Activated CD4-positive, alpha-beta memory T cell treated with anti-CD3 and anti-CD28 coated beads for 36 hours (primary cell): ENCODE measurements at regions of chr9 and their contacts with region 1.

Region 1: GRCh38 chr9:114906908-114907571 is 23.4 kb downstream of the TNFSF8 start:
- DNase-seq: peak; percentile 46
- H3K4me3 Mint-ChIP-seq: no peak overlapping the region
- H3K27ac Mint-ChIP-seq: peak overlapping the region; percentile 96
- H3K4me1 Mint-ChIP-seq: peaks cover 92% of the 10 kb centered on the region
- H3K27me3 Mint-ChIP-seq: no peaks in the 10 kb centered on the region

Region 2: DNA sequence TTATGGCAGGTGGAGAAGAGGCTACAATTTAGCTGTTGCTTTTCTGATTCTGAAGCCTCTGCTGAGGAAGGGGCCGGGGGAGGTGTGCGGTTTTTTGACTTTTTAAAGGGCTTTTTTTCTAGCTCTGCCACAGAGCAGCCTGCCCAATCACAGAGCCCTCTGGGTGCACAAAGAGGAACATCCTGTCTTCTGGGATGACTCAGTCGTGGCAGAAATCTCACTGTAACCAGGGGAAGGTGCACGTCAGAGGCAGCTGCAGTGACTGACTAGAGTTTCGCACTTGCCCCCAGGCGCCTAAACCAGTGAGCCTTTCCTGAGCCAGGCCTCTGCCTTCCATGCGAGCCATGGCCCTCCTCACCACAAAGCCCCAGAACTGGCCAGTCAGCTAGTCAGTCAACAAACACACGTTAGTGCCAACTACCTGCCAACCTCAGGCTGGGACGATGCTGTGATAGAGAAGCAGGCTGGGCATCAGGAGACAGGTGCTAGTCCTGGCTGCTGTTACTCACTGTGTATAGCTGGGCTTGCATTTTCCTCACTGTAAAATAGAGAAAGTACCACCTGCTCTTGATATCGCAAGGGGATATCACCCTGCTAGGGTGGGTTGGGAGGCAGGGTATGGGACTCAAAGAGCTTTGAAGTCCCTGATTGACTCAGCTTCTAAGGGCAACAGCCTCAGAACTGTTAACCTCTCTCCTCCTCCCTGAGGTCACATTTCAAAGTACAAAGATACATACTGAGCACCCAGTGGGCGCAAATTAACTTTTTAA is 521.4 kb before region 1 on chr9:
- CTCF ChIA-PET with region 1: no interaction called
- POLR2A ChIA-PET with region 1: no interaction called
- intact Hi-C with region 1: loop called (anchors 5 kb)
- DNase-seq: peak; percentile 95
- H3K4me3 Mint-ChIP-seq: peak overlapping the region; percentile 99
- H3K27ac Mint-ChIP-seq: peak overlapping the region; percentile 94
- H3K4me1 Mint-ChIP-seq: peaks cover 65% of the 10 kb centered on the region
- H3K27me3 Mint-ChIP-seq: no peaks in the 10 kb centered on the region

Region 3: DNA sequence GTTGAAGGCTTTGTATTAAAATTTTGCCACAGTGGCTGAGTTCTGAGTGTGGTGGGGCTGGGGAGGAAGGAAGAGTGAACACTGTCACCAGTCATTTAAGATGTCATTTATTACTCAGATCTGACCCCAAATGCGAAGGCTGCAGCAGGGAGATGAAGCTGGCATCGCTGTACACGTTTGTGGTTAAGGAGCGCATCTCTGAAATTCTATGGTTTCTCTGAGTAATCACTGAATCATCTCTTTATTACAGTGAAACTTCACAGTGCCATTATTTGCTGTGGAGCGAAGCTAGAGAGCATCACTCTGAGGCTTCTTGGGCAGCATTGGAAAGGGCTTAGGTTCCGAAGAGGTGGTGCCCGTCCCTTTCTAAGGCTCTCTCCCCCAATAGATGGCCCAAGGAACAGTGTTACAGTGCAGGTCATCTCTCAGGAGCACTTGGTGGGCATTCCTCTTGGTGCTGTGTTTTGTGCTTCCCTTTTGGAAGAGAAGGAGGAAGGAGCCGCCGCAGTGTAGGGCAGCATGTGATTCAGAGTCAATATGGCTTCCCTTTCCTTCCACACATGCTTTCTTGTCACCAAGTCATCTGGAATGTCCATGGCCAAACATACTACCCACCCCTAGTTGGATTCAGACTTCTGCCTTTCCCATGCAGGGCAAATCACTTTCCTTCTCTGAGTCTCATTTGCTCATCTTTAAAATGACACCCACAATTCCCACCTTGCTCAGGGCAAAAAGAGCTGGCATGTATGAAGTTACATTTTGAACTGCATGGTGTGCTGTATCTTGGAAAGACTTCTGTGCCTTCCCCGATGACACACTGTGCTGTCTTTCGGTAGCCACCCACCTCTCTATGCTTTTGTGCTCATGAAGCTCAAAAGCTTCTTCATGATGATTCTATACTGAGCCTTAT is 215.7 kb before region 1 on chr9:
- CTCF ChIA-PET with region 1: interaction called, 35 read pairs
- POLR2A ChIA-PET with region 1: interaction called, 9 read pairs
- intact Hi-C with region 1: loop called (anchors 1 kb)
- DNase-seq: peak; percentile 88
- H3K4me3 Mint-ChIP-seq: peak overlapping the region; percentile 55
- H3K27ac Mint-ChIP-seq: peak overlapping the region; percentile 99
- H3K4me1 Mint-ChIP-seq: peaks cover 87% of the 10 kb centered on the region
- H3K27me3 Mint-ChIP-seq: no peaks in the 10 kb centered on the region

Region 4: GRCh38 chr9:114889802-114890251 is 17.2 kb before region 1 on chr9:
- CTCF ChIA-PET with region 1: interaction called, 16 read pairs
- POLR2A ChIA-PET with region 1: interaction called, 4 read pairs
- intact Hi-C with region 1: loop called (anchors 1 kb)
- DNase-seq: peak; percentile 68
- H3K4me3 Mint-ChIP-seq: no peak overlapping the region
- H3K27ac Mint-ChIP-seq: peak overlapping the region; percentile 42
- H3K4me1 Mint-ChIP-seq: peaks cover 59% of the 10 kb centered on the region
- H3K27me3 Mint-ChIP-seq: no peaks in the 10 kb centered on the region

Region 5: DNA sequence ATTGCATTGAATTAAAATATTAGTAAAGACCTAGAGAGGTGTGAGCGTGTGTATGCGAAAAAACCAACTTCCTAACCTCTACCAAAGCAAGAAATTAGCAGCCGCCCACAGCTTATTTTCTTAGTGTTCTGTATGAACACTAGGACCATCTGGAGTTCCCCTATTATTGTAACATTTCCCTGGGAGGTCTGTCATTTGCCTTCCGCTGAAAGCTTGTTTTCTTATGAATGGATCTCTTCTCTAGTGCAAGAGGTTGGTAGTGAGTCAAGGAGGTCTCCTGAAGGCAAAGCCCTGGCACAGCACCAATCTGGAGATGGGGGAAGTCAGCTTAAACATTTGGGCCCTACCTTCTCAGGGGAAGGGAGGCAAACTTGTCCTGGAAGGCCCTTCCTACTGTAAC is 12.6 kb after region 1 on chr9:
- CTCF ChIA-PET with region 1: interaction called, 32 read pairs
- POLR2A ChIA-PET with region 1: interaction called, 19 read pairs
- intact Hi-C with region 1: loop called (anchors 1 kb)
- DNase-seq: peak; percentile 68
- H3K4me3 Mint-ChIP-seq: peak overlapping the region; percentile 10
- H3K27ac Mint-ChIP-seq: peak overlapping the region; percentile 76
- H3K4me1 Mint-ChIP-seq: peaks cover 93% of the 10 kb centered on the region
- H3K27me3 Mint-ChIP-seq: no peaks in the 10 kb centered on the region

Region 6: DNA sequence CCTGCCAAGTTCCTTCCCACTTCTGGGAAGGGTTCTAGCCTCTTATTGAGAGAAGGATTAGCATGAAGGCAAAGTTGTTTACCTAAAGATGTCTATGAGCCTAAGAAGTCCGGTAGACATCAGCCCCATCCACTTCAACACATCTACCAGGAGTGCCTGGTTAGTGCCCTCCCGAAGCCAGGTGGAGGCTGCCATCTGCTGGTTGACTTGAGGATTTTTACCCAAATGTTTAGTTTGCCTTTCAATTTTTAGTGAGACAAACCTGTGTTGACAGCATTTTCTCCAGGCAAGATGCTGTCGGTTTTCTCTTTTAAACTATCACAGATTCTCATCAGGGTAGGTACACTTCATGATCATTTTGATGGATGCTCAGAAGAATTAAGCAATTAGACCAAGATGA is 107.0 kb after region 1 on chr9:
- CTCF ChIA-PET with region 1: interaction called, 87 read pairs
- POLR2A ChIA-PET with region 1: interaction called, 3 read pairs
- intact Hi-C with region 1: loop called (anchors 1 kb)
- DNase-seq: peak; percentile 88
- H3K4me3 Mint-ChIP-seq: no peak overlapping the region
- H3K27ac Mint-ChIP-seq: peak overlapping the region; percentile 34
- H3K4me1 Mint-ChIP-seq: peaks cover 47% of the 10 kb centered on the region
- H3K27me3 Mint-ChIP-seq: peaks cover 2% of the 10 kb centered on the region

Region 7: DNA sequence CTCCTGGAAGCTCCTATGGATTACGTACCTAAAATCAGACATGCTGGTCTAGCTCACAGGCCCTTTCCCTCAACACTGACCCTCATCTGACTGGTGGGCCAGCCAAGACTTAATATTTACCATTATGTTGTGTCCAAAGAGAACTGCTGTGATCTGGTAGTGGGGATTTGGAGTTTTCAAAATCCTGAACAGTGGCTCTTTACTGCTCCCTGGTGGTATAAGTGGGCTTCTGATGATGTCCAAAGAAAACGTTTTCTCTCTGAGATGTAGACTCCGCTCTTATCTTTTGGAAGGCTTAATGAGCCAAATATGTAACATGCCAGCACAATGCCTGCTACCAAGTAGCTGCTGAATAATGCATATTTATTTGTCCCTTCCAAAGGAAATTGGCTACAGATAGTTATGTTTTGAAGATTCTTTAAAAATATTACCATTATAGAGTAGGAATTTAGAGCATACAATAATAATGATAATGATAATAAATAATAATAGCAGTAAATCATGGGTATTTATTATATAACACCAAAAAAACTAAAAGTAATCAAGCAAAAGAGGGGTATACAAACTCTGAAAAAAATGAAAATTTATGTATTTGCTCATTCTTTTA is 617.5 kb after region 1 on chr9:
- CTCF ChIA-PET with region 1: no interaction called
- POLR2A ChIA-PET with region 1: no interaction called
- intact Hi-C with region 1: loop called (anchors 10 kb)
- DNase-seq: no peak
- H3K4me3 Mint-ChIP-seq: no peak overlapping the region
- H3K27ac Mint-ChIP-seq: no peak overlapping the region
- H3K4me1 Mint-ChIP-seq: no peaks in the 10 kb centered on the region
- H3K27me3 Mint-ChIP-seq: peaks cover 11% of the 10 kb centered on the region